ENCODE measurements at regions of chrX and their contacts with region 1.

Region 1: GRCh38 chrX:78103623-78104446 is at the start of gene PGK1:
- DNase-seq: peak; percentile 98
- H3K4me3 Mint-ChIP-seq: peak within 1 kb of the TSS; percentile 97
- H3K27ac Mint-ChIP-seq: peak within 1 kb of the TSS; percentile 91
- H3K4me1 Mint-ChIP-seq: peaks cover 25% of the 10 kb centered on the region
- H3K27me3 Mint-ChIP-seq: no peaks in the 10 kb centered on the region
- total RNA-seq, gene PGK1: 1,039 and 1,063 TPM in 2 replicates

Region 2: GRCh38 chrX:77785486-77786364 is 318.1 kb before region 1 on chrX and contains the start of gene ATRX:
- intact Hi-C with region 1: loop called (anchors 2 kb)
- DNase-seq: peak; percentile 92
- H3K4me3 Mint-ChIP-seq: peak within 1 kb of the TSS; percentile 99
- H3K27ac Mint-ChIP-seq: peak within 1 kb of the TSS; percentile 100
- H3K4me1 Mint-ChIP-seq: peaks cover 15% of the 10 kb centered on the region
- H3K27me3 Mint-ChIP-seq: no peaks in the 10 kb centered on the region
- total RNA-seq, gene ATRX: 62.3 and 72.9 TPM in 2 replicates

Region 3: GRCh38 chrX:77910108-77910840 is 193.6 kb before region 1 on chrX and contains the start of gene ATP7A:
- intact Hi-C with region 1: loop called (anchors 2 kb)
- DNase-seq: peak; percentile 96
- H3K4me3 Mint-ChIP-seq: peak within 1 kb of the TSS; percentile 96
- H3K27ac Mint-ChIP-seq: peak within 1 kb of the TSS; percentile 99
- H3K4me1 Mint-ChIP-seq: peaks cover 10% of the 10 kb centered on the region
- H3K27me3 Mint-ChIP-seq: no peaks in the 10 kb centered on the region
- total RNA-seq, gene ATP7A: 7.6 and 8.1 TPM in 2 replicates

Region 4: DNA sequence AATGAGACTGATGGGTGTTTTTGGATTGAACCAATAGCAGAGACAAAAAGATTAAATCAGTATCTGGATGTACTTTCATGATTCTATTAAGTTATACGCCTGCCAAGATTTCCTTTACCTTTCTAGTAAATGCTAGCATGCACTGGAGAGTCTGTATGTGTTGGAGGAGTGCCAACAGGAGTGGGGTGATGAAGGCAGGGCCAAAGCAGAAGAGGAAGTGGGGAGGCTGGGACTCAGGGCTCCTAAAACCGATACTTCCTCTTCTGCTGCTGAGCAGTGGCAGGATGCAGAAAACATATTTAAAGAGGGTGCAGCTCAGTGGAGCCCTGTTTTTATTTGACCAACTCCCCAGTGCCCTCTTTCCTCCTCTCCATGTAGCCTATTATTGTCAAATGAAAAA is 218.0 kb after region 1 on chrX:
- intact Hi-C with region 1: loop called (anchors 10 kb)
- DNase-seq: peak; percentile 83
- H3K4me3 Mint-ChIP-seq: peak overlapping the region; percentile 86
- H3K27ac Mint-ChIP-seq: peak overlapping the region; percentile 96
- H3K4me1 Mint-ChIP-seq: peaks cover 34% of the 10 kb centered on the region
- H3K27me3 Mint-ChIP-seq: no peaks in the 10 kb centered on the region

Measured in activated CD4-positive, alpha-beta T cell treated with anti-CD3 and anti-CD28 coated beads, Interleukin-2, amount 10 ng/mL, durations not matched to agents 24 days and 14 days (primary cell).